GM12878 (cell line): ENCODE measurements at regions of chr18 and their contacts with region 1.

Region 1: DNA sequence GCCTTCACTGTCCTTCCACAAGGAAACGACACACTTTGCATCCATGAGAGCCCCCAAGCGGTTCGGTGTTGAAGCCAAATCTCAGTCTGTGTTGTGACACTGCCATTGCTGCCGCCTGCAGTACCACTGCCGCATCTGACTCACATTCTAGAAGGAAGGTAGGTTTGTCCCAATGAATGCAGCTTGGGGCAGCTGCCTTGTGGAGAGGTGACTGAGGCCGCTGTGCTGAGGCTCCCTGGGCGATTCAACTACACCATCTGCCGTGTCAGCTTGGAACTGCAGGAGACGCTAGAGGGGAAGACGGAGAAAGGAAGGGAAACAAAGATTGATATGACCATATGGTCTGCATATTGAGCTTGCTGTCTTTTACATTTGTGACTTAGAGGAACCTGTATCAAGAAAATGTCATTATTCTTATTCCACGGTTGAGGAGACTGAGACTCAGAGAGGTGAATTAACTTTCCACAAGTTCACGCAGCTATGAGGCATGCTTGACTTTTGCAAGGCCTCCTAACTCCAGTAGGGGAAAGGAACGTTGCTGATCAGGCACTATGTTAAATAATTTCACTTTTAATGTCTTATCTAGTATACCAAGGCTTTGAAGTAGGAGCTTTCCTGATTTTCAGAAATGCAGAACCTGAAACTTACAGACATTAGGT is 43.5 kb upstream of the LMAN1 start:
- DNase-seq: peak; percentile 40
- ATAC-seq: peak; percentile 100
- H3K4me3 ChIP-seq: no peak overlapping the region
- H3K27ac ChIP-seq: no peak overlapping the region
- H3K4me1 ChIP-seq: no peaks in the 10 kb centered on the region
- H3K27me3 ChIP-seq: no peaks in the 10 kb centered on the region
- CTCF ChIP-seq: peak; percentile 89 to 97 (median 96)
- EP300 ChIP-seq: no peak
- POLR2A ChIP-seq: no peak
- RAD21 ChIP-seq: peak; percentile 97

Region 2: GRCh38 chr18:59085797-59086196 is 316.8 kb before region 1 on chr18:
- CTCF ChIA-PET with region 1: interaction called, 14 read pairs
- POLR2A ChIA-PET with region 1: no interaction called
- RAD21 ChIA-PET with region 1: interaction called, 9 read pairs
- SMC1A ChIA-PET with region 1: interaction called, 6 read pairs
- in situ Hi-C with region 1: no loop called
- intact Hi-C with region 1: loop called (anchors 2 kb)
- DNase-seq: no peak
- ATAC-seq: no peak
- H3K4me3 ChIP-seq: no peak overlapping the region
- H3K27ac ChIP-seq: no peak overlapping the region
- H3K4me1 ChIP-seq: peaks cover 4% of the 10 kb centered on the region
- H3K27me3 ChIP-seq: peaks cover 0 to 3% of the 10 kb centered on the region in 2 experiments; a peak in 1 of 4 replicates
- CTCF ChIP-seq: no peak
- EP300 ChIP-seq: no peak
- POLR2A ChIP-seq: no peak
- RAD21 ChIP-seq: no peak

Region 3: DNA sequence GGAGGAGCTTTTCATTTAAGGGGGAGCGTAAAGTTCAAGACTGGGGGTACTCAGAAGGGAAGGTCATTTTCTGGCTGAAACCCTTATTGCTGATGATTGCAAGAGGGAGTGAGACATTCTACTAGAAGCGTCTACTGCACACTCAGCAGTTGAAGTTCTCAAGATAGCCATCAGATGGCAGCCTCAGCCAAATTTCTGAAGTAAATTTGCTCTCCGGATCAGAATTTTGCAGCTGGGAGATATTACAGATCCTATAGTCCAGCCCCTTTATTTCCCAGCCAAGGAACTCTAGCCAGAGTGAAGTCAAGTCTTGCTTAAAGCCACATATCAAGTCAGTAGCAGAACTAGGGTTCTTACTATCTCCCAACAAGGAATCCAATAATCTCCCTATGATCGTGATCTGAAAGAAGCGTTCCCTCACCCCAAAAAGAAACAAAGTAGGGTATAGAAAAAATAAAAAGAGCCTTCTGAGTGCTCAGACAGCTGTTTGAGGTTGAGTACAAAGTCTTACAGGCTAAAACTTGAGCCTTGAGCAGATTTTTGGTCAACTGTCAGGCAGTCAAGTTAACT is 153.3 kb before region 1 on chr18:
- CTCF ChIA-PET with region 1: interaction called, 73 read pairs
- POLR2A ChIA-PET with region 1: no interaction called
- RAD21 ChIA-PET with region 1: interaction called, 23 read pairs
- SMC1A ChIA-PET with region 1: interaction called, 43 read pairs
- in situ Hi-C with region 1: no loop called
- intact Hi-C with region 1: loop called (anchors 2 kb)
- DNase-seq: no peak
- ATAC-seq: peak; percentile 73
- H3K4me3 ChIP-seq: no peak overlapping the region
- H3K27ac ChIP-seq: no peak overlapping the region
- H3K4me1 ChIP-seq: no peaks in the 10 kb centered on the region
- H3K27me3 ChIP-seq: peaks cover 0 to under 1% of the 10 kb centered on the region in 2 experiments; a peak in 1 of 4 replicates
- CTCF ChIP-seq: peak; percentile 69 to 74 (median 73)
- EP300 ChIP-seq: no peak
- POLR2A ChIP-seq: no peak
- RAD21 ChIP-seq: peak; percentile 70

Region 4: DNA sequence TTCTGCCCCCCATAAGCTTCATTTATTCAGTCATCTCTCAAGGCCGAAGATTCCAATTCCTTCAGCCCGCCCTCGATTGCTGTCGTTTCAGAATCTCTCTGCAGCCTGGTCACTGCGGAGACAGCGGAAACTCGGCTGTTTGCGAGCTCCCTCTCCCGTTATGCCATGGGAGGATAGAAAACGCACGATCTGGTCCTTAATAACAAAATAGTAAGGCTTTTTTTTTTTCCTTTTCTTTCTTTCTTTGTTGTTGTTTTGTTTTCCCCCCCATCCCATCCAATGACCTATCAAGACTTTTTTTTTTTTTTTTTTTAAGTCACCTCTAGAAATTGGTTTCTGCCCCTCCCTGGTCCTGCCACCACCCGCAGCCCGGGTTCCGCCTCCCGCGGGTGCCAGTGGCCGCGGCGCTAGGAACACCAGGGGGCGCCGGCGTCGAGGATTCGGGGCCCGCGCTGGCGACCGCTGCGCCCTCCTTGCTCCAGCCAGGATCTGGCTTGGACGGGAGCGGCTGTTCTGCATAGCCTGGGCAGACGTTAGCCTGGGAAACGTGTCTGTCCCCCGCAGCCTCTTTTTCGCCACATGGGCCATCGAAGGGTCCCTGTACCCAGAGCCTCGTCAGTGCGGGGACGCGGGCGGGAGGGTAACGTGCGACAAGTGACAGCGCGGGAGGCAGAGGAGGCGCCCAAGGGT is 94.2 kb before region 1 on chr18:
- CTCF ChIA-PET with region 1: interaction called, 165 read pairs
- POLR2A ChIA-PET with region 1: no interaction called
- RAD21 ChIA-PET with region 1: interaction called, 46 read pairs
- SMC1A ChIA-PET with region 1: interaction called, 72 read pairs
- in situ Hi-C with region 1: no loop called
- intact Hi-C with region 1: loop called (anchors 2 kb)
- DNase-seq: no peak
- ATAC-seq: peak; percentile 99
- H3K4me3 ChIP-seq: peak overlapping the region; percentile 55; the same call in 1 of the 2 replicates
- H3K27ac ChIP-seq: no peak overlapping the region
- H3K4me1 ChIP-seq: no peaks in the 10 kb centered on the region
- H3K27me3 ChIP-seq: peaks cover 3 to 4% of the 10 kb centered on the region in 2 experiments; a peak in 2 of 4 replicates
- CTCF ChIP-seq: peak; percentile 67 to 83 (median 82)
- EP300 ChIP-seq: no peak
- POLR2A ChIP-seq: no peak
- RAD21 ChIP-seq: peak; percentile 78

Region 5: GRCh38 chr18:59358712-59359575 is 43.6 kb before region 1 on chr18 and contains the start of gene LMAN1:
- CTCF ChIA-PET with region 1: interaction called, 24 read pairs
- POLR2A ChIA-PET with region 1: no interaction called
- RAD21 ChIA-PET with region 1: interaction called, 5 read pairs
- SMC1A ChIA-PET with region 1: interaction called, 12 read pairs
- in situ Hi-C with region 1: no loop called
- intact Hi-C with region 1: no loop called
- DNase-seq: peak; percentile 51
- ATAC-seq: peak; percentile 97
- H3K4me3 ChIP-seq: peak within 1 kb of the TSS; percentile 68
- H3K27ac ChIP-seq: peak within 1 kb of the TSS; percentile 77
- H3K4me1 ChIP-seq: no peaks in the 10 kb centered on the region
- H3K27me3 ChIP-seq: no peaks in the 10 kb centered on the region
- CTCF ChIP-seq: no peak
- EP300 ChIP-seq: no peak
- POLR2A ChIP-seq: peak; percentile 90
- RAD21 ChIP-seq: no peak
- polyA plus RNA-seq, gene LMAN1: 15.0 to 20.3 TPM